ENCODE measurements at regions of chr11 and their contacts with region 1.

Region 1: GRCh38 chr11:120682866-120683265 is 171.3 kb downstream of the GRIK4 start:
- DNase-seq: no peak
- ATAC-seq: no peak
- H3K4me3 ChIP-seq: no peak overlapping the region
- H3K27ac ChIP-seq: no peak overlapping the region
- H3K4me1 ChIP-seq: no peaks in the 10 kb centered on the region; the same call in 1 of the 2 replicates
- H3K27me3 ChIP-seq: no peaks in the 10 kb centered on the region
- CTCF ChIP-seq: no peak
- EP300 ChIP-seq: no peak
- POLR2A ChIP-seq: no peak
- RAD21 ChIP-seq: no peak

Region 2: GRCh38 chr11:120335908-120336640 is 346.8 kb before region 1 on chr11 and contains the start of gene ARHGEF12:
- CTCF ChIA-PET with region 1: interaction called, 16 read pairs
- POLR2A ChIA-PET with region 1: no interaction called
- RAD21 ChIA-PET with region 1: interaction called, 7 read pairs
- SMC1A ChIA-PET with region 1: interaction called, 12 read pairs
- in situ Hi-C with region 1: no loop called
- intact Hi-C with region 1: no loop called
- DNase-seq: peak; percentile 33
- ATAC-seq: peak; percentile 64
- H3K4me3 ChIP-seq: peak within 1 kb of the TSS; percentile 94
- H3K27ac ChIP-seq: peak within 1 kb of the TSS; percentile 74
- H3K4me1 ChIP-seq: peaks cover 9% of the 10 kb centered on the region
- H3K27me3 ChIP-seq: no peaks in the 10 kb centered on the region
- CTCF ChIP-seq: peak; percentile 40 to 48 (median 44)
- EP300 ChIP-seq: peak in 1 of 2 experiments; percentile 43; a peak in 1 of 4 replicates
- POLR2A ChIP-seq: peak; percentile 67
- RAD21 ChIP-seq: peak; percentile 23; the same call in 1 of the 2 replicates
- polyA plus RNA-seq, gene ARHGEF12: 2.7 to 3.6 TPM

Region 3: GRCh38 chr11:120523196-120523595 is 159.7 kb before region 1 on chr11:
- CTCF ChIA-PET with region 1: interaction called, 11 read pairs
- POLR2A ChIA-PET with region 1: no interaction called
- RAD21 ChIA-PET with region 1: interaction called, 11 read pairs
- SMC1A ChIA-PET with region 1: interaction called, 4 read pairs
- in situ Hi-C with region 1: loop called (anchors 10 kb)
- intact Hi-C with region 1: no loop called
- DNase-seq: no peak
- ATAC-seq: peak; percentile 51
- H3K4me3 ChIP-seq: no peak overlapping the region
- H3K27ac ChIP-seq: no peak overlapping the region
- H3K4me1 ChIP-seq: no peaks in the 10 kb centered on the region
- H3K27me3 ChIP-seq: peaks cover 0 to 1% of the 10 kb centered on the region in 2 experiments; a peak in 2 of 4 replicates
- CTCF ChIP-seq: no peak
- EP300 ChIP-seq: no peak
- POLR2A ChIP-seq: no peak
- RAD21 ChIP-seq: no peak

Region 4: GRCh38 chr11:120622189-120622875 is 60.5 kb before region 1 on chr11:
- CTCF ChIA-PET with region 1: interaction called, 45 read pairs
- POLR2A ChIA-PET with region 1: interaction called, 3 read pairs
- RAD21 ChIA-PET with region 1: interaction called, 25 read pairs
- SMC1A ChIA-PET with region 1: interaction called, 23 read pairs
- in situ Hi-C with region 1: no loop called
- intact Hi-C with region 1: no loop called
- DNase-seq: no peak
- ATAC-seq: peak; percentile 89
- H3K4me3 ChIP-seq: no peak overlapping the region
- H3K27ac ChIP-seq: no peak overlapping the region; the same call in 1 of the 2 replicates
- H3K4me1 ChIP-seq: peaks cover 6% of the 10 kb centered on the region; the same call in 1 of the 2 replicates
- H3K27me3 ChIP-seq: no peaks in the 10 kb centered on the region
- CTCF ChIP-seq: peak; percentile 35 to 56 (median 54)
- EP300 ChIP-seq: no peak
- POLR2A ChIP-seq: no peak
- RAD21 ChIP-seq: peak; percentile 36

Region 5: DNA sequence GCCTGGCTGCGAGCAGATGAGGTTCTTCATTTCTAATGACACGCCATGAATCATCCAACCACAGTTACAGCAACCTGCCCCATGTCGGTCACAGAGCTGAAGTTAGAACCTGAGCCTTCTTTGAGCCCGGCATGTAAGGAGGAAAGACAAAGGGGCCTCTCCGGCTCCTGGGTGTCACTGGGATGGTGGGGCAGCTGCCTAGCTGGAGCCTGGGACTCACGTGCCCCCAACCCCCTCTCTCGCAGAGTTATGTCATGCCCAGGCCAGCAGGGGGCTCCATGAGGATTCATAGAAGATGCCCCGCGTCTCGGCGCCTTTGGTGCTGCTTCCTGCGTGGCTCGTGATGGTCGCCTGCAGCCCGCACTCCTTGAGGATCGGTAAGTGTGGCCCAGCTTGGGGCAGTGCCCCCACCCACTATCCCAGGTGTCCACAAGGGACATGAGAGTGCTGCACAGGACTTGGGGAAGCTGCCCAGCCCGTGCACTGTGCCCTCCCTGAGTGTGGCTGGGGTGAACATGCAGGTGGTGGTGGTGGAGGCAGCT is 22.8 kb before region 1 on chr11:
- CTCF ChIA-PET with region 1: interaction called, 111 read pairs
- POLR2A ChIA-PET with region 1: no interaction called
- RAD21 ChIA-PET with region 1: interaction called, 19 read pairs
- SMC1A ChIA-PET with region 1: interaction called, 36 read pairs
- in situ Hi-C with region 1: no loop called
- intact Hi-C with region 1: no loop called
- DNase-seq: no peak
- ATAC-seq: peak; percentile 24
- H3K4me3 ChIP-seq: no peak overlapping the region
- H3K27ac ChIP-seq: no peak overlapping the region
- H3K4me1 ChIP-seq: peaks cover 35% of the 10 kb centered on the region
- H3K27me3 ChIP-seq: no peaks in the 10 kb centered on the region; a peak in 1 of 4 replicates
- CTCF ChIP-seq: peak; percentile 52 to 79 (median 72)
- EP300 ChIP-seq: no peak
- POLR2A ChIP-seq: no peak
- RAD21 ChIP-seq: peak; percentile 53

Region 6: DNA sequence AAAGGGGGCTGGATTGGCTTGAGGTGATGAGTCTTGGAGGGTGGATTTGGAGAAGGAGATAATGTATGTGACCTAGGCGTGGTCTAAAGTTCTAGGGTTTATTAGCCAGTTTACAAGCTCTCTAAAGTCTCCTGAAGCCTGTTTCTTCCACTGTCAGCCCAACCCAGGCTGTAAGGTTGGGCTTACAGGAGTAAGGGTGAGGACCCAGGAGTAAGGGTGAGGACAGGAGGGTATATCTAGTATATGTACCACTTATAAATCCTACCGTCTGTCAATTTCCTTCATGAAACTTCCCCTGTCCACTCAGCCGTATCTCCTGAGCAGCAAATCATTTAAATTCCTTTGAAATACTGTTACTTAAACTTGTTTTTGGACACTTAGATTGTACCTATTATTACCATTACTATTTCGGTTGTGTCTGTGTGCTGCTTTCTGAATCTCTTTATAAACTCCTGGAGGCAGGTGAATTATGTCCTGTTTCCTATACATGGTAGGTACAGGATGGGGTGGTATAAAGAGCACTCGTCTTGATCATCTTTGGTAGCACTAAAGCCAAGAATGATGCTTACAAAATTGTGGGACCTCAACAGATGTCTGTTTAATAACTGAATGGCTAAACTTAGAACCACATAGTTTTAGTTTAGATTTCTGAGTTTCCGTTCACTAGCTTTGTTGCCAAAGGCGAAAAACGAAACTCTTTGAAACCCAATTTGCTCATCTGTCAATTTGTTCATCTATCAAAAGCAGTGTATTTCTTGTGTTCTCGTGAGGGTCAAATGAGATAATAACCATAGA is 20.7 kb after region 1 on chr11:
- CTCF ChIA-PET with region 1: interaction called, 86 read pairs
- POLR2A ChIA-PET with region 1: interaction called, 4 read pairs
- RAD21 ChIA-PET with region 1: interaction called, 6 read pairs
- SMC1A ChIA-PET with region 1: interaction called, 10 read pairs
- in situ Hi-C with region 1: no loop called
- intact Hi-C with region 1: no loop called
- DNase-seq: peak; percentile 77
- ATAC-seq: peak; percentile 85
- H3K4me3 ChIP-seq: peak overlapping the region; percentile 11; the same call in 1 of the 2 replicates
- H3K27ac ChIP-seq: peak overlapping the region; percentile 75
- H3K4me1 ChIP-seq: peaks cover 31% of the 10 kb centered on the region
- H3K27me3 ChIP-seq: no peaks in the 10 kb centered on the region
- CTCF ChIP-seq: no peak
- EP300 ChIP-seq: no peak; a peak in 1 of 4 replicates
- POLR2A ChIP-seq: no peak
- RAD21 ChIP-seq: no peak

Region 7: DNA sequence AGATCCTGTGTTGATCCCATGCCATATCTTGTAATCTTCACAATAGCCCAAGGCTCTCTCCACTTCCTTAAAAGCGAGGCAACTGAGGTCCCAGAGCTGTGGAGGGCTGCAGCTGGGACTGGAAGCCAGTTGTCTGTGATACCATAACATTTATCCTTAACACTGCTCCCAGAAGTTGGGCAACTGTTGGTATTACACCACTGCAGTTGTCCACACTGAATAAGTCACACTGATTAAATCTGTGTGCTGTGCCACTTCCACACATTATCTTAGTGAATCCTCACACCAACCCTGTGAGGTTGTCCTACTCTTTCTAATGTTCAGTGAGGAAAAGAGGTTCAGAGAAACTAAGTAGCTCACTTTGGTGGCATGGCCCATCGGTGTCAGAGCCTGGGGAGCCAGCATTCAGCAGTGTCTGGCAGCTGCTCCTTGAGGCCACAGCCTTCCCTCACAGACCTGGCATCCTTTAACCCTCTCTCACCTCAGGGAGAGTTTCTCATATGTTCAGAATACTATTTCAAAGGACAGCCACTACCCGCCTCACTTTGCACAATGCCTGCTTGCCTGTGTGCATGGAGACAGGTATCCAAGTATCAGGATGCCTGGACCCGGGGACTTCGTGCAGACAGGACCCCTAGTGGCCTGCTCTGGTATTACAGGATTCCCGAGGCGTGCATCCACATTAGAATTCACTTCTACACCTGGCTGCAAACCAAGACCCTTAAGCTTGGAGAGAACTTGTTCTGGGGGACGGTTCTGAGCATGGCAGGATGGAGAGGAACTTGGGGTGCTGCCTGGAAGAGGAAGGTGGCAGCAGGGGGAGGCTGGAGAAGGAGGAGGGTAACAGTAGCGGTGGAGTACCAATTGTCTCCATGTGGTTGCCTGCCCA is 119.2 kb after region 1 on chr11:
- CTCF ChIA-PET with region 1: interaction called, 34 read pairs
- POLR2A ChIA-PET with region 1: no interaction called
- RAD21 ChIA-PET with region 1: interaction called, 16 read pairs
- SMC1A ChIA-PET with region 1: interaction called, 18 read pairs
- in situ Hi-C with region 1: no loop called
- intact Hi-C with region 1: loop called (anchors 10 kb)
- DNase-seq: no peak
- ATAC-seq: peak; percentile 80
- H3K4me3 ChIP-seq: no peak overlapping the region
- H3K27ac ChIP-seq: no peak overlapping the region
- H3K4me1 ChIP-seq: no peaks in the 10 kb centered on the region
- H3K27me3 ChIP-seq: no peaks in the 10 kb centered on the region
- CTCF ChIP-seq: peak; percentile 87 to 96 (median 91)
- EP300 ChIP-seq: no peak
- POLR2A ChIP-seq: no peak
- RAD21 ChIP-seq: peak; percentile 72

Measured in GM12878 (cell line).